Posterior vena cava (tissue), 2 donors: ENCODE measurements at regions of chr19 and their contacts with region 1.

Region 1: DNA sequence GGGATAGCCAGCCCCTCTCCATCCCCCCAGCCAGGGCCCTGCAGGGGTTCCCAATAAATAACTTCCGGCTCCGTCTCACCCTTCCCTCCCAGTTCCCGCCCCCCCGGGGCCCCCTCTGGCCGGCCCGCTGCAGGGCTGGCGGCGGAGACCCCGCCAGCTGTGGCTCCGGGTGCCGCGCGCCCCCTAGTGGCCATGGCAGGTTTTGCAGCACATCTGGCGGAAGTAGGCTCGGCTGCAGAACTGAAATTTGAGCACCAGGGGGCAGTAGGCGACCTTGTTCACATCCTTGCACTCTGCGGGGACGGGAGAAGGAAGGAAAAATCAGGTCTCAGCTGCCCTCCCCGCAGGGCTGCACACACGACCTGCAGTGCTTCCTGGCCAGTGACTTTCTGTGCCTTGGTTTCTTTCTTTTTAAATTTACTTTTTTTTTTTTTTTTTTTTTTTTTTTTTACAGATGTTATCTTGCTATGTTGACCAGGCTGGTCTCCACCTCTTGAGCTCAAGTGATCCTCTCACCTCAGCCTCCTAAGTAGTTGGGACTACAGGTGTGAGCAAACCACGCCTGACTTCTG is 3.6 kb upstream of the MYO1F start:
- DNase-seq: peak; percentile 94

Region 2: GRCh38 chr19:8641908-8642547 is 61.2 kb after region 1 on chr19:
- intact Hi-C with region 1: loop called in 1 of 2 experiments (anchors 5 kb)
- DNase-seq: no peak